ENCODE measurements at regions of chrX and their contacts with region 1.

Region 1: GRCh38 chrX:74382613-74383012 is 38.7 kb upstream of the SLC16A2 start:
- DNase-seq: peak; percentile 83
- H3K4me3 Mint-ChIP-seq: no peak overlapping the region
- H3K27ac Mint-ChIP-seq: no peak overlapping the region
- H3K4me1 Mint-ChIP-seq: peaks cover 7% of the 10 kb centered on the region
- H3K27me3 Mint-ChIP-seq: peaks cover 44% of the 10 kb centered on the region
- CTCF ChIP-seq: peak; percentile 81

Region 2: DNA sequence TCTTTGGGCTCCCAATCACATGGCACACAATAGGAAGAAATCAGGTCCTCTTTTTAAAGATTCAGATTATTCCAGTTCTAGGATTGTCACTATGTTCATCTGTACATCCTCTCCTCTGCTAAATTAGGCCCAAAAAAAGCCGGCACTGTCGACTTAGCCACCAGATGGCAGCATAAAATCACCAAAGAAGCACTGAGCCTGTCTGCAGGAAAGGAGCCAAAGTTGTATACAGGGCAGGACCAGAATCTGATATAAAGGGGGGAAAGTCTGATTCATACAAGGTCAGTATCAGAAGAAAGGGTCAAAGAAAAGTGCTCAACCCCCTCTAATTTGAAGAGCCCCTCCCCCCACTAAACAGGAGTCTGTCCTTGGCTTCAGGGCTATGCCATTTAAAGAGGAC is 527.1 kb before region 1 on chrX:
- CTCF ChIA-PET with region 1: interaction called, 4 read pairs
- POLR2A ChIA-PET with region 1: no interaction called
- intact Hi-C with region 1: loop called (anchors 1 kb)
- DNase-seq: peak; percentile 82
- H3K4me3 Mint-ChIP-seq: no peak overlapping the region
- H3K27ac Mint-ChIP-seq: no peak overlapping the region
- H3K4me1 Mint-ChIP-seq: no peaks in the 10 kb centered on the region
- H3K27me3 Mint-ChIP-seq: peaks cover 12% of the 10 kb centered on the region
- CTCF ChIP-seq: peak; percentile 64

Region 3: DNA sequence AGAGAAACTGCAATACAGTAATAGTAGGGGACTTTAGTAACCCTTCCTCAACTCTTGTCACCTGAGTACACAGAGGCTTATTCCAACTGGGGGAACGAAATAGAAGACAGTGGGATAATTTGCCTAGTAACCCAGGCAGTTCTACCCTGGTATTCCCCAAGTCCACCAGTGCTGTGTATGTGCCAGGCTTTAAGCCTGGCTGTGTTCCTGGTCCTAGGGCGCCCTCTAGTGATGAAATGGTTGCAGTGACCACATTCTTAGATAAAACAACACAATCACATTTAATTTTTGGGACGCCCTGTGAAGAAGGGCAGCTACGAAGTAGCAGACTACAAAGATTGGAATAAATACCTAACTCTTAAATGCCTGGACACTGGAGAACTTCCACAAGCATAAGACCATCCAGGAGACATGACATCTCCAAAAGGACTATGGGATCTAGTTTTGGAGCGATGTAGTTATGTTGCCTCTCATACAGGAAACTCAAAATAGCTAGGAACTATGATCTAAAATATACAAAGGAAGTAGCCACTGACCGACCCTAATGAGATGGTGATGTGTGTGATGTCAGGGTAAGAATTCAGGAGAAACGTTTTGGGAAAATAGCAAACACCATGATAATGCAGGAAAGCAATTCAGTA is 367.1 kb before region 1 on chrX:
- CTCF ChIA-PET with region 1: no interaction called
- POLR2A ChIA-PET with region 1: no interaction called
- intact Hi-C with region 1: no loop called
- DNase-seq: peak; percentile 86
- H3K4me3 Mint-ChIP-seq: no peak overlapping the region
- H3K27ac Mint-ChIP-seq: no peak overlapping the region
- H3K4me1 Mint-ChIP-seq: no peaks in the 10 kb centered on the region
- H3K27me3 Mint-ChIP-seq: no peaks in the 10 kb centered on the region
- CTCF ChIP-seq: peak; percentile 78

Region 4: DNA sequence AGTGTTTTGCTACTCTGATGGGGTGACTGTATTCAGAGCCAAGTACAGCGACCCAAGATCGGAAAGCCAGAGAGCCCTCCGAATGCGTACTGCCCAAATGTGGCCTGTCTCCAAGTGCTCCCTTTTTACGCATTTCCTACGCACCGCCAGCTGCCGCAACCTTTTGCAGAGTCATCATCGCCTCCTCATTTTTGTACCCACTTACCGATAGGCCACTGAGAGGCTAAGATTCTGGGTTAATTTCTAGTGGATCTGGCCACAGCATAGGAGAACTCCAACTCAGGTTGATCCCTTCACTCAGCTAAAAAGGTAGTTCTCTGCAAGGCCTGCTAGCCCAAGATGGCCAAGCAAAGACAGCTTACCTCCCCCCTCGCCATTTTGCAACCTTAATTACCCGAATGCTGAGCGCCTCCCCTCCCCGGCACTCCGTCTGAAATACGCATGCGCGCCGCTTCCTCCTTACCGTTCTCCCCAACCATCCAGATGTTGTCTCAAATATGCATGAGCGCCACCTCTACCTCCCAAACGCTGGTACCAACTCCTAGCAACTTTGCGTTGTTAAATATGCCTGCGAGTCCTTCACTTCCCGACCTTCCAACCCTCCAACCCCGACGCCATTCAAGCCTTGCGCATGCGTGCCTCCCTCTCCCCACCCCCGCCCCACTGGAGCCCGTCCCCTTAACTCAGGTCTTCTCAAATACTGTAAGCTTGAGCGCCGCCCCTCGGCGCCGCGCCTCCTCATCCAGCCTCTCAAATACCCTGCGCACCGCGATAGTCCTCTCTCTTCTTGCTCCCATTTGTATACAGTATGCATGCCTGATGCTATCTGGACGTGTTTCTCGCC is 90.4 kb before region 1 on chrX:
- CTCF ChIA-PET with region 1: interaction called, 4 read pairs
- POLR2A ChIA-PET with region 1: interaction called, 4 read pairs
- intact Hi-C with region 1: loop called (anchors 1 kb)
- DNase-seq: peak; percentile 87
- H3K4me3 Mint-ChIP-seq: peak overlapping the region; percentile 79
- H3K27ac Mint-ChIP-seq: peak overlapping the region; percentile 63
- H3K4me1 Mint-ChIP-seq: no peaks in the 10 kb centered on the region
- H3K27me3 Mint-ChIP-seq: no peaks in the 10 kb centered on the region
- CTCF ChIP-seq: no peak

Region 5: GRCh38 chrX:74421036-74421739 is 38.6 kb after region 1 on chrX and contains the start of gene SLC16A2:
- CTCF ChIA-PET with region 1: interaction called, 13 read pairs
- POLR2A ChIA-PET with region 1: no interaction called
- intact Hi-C with region 1: loop called (anchors 1 kb)
- DNase-seq: peak; percentile 69
- H3K4me3 Mint-ChIP-seq: peak within 1 kb of the TSS; percentile 89
- H3K27ac Mint-ChIP-seq: peak within 1 kb of the TSS; percentile 56
- H3K4me1 Mint-ChIP-seq: no peaks in the 10 kb centered on the region
- H3K27me3 Mint-ChIP-seq: peaks cover 11% of the 10 kb centered on the region
- CTCF ChIP-seq: no peak
- total RNA-seq, gene SLC16A2: 11.9 and 13.7 TPM in 2 replicates

Region 6: DNA sequence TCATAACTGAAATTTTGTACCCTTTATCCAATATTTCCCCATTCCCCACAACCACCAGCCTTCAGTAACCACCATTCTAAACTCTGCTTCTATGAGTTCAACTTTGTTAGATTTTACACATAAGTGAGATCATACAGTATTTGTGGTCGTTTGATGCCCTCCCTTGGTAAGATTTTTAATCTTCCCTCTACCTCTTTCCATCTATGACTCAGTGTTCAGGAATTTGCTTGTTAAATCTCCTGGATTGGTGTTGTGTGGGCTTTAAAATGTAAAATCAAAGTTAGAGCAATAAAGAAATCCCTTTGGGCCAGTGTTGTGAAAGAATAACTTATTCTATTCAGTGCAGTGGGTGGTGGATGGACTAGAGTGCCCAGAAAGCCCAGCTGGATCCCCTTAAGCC is 76.1 kb after region 1 on chrX:
- CTCF ChIA-PET with region 1: interaction called, 13 read pairs
- POLR2A ChIA-PET with region 1: no interaction called
- intact Hi-C with region 1: loop called (anchors 1 kb)
- DNase-seq: peak; percentile 74
- H3K4me3 Mint-ChIP-seq: no peak overlapping the region
- H3K27ac Mint-ChIP-seq: no peak overlapping the region
- H3K4me1 Mint-ChIP-seq: peaks cover 6% of the 10 kb centered on the region
- H3K27me3 Mint-ChIP-seq: peaks cover 39% of the 10 kb centered on the region
- CTCF ChIP-seq: peak; percentile 19

Region 7: DNA sequence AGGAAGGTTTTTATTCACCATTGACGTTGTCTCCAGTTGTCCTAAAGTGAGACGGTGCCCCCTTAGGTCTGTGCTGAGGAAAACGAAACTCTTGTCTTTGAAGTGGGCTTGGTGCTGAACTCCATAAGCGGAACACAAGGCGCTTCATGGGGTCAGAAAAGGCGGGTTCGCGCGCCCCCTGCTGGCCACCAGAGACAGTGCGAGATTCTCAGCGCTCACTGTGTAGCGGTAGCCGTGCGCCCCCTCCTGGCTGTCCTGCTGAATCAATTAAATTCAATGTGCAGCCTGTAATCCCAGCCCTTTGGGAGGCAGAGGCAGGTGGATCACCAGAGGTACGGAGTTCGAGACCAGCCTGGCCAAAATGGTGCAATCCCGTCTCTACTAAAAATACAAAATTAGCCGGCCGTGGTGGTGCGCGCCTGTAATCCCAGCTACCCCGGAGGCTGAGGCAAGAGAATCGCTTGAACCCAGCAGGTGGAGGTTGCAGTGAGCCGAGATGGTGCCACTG is 167.7 kb after region 1 on chrX:
- CTCF ChIA-PET with region 1: interaction called, 41 read pairs
- POLR2A ChIA-PET with region 1: no interaction called
- intact Hi-C with region 1: loop called (anchors 1 kb)
- DNase-seq: peak; percentile 76
- H3K4me3 Mint-ChIP-seq: no peak overlapping the region
- H3K27ac Mint-ChIP-seq: no peak overlapping the region
- H3K4me1 Mint-ChIP-seq: no peaks in the 10 kb centered on the region
- H3K27me3 Mint-ChIP-seq: peaks cover 2% of the 10 kb centered on the region
- CTCF ChIP-seq: peak; percentile 98

Region 8: DNA sequence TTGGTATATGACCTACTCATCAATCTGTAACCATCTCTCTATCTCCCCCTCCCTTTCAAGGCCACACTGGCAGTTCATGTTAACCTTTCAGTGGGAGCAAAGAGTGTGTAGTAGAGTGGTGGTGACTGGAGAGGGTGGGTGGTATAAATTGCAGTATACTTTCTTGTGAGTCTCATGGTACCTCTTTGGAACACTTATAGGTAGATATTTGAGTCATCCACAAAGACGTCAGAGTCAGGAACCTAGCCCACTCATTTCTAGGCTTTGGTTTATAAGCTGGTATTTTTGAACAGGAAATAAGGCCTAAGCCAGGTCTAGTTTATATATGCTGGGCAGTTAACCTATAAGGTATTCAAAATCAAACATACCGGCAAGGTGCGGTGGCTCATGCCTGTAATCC is 195.5 kb after region 1 on chrX:
- CTCF ChIA-PET with region 1: no interaction called
- POLR2A ChIA-PET with region 1: no interaction called
- intact Hi-C with region 1: no loop called
- DNase-seq: no peak
- H3K4me3 Mint-ChIP-seq: no peak overlapping the region
- H3K27ac Mint-ChIP-seq: no peak overlapping the region
- H3K4me1 Mint-ChIP-seq: no peaks in the 10 kb centered on the region
- H3K27me3 Mint-ChIP-seq: peaks cover 11% of the 10 kb centered on the region
- CTCF ChIP-seq: no peak

Measured in MCF 10A (cell line).